PC-3 (cell line): ENCODE measurements at regions of chr1 and their contacts with region 1.

Region 1: GRCh38 chr1:150979092-150980056 is 2.7 kb upstream of the ANXA9 start:
- DNase-seq: peak; percentile 99
- ATAC-seq: peak; percentile 13
- H3K4me3 ChIP-seq: no peak overlapping the region
- H3K27ac ChIP-seq: no peak overlapping the region
- H3K4me1 ChIP-seq: peaks cover 42% of the 10 kb centered on the region
- H3K27me3 ChIP-seq: no peaks in the 10 kb centered on the region
- CTCF ChIP-seq: peak; percentile 100

Region 2: DNA sequence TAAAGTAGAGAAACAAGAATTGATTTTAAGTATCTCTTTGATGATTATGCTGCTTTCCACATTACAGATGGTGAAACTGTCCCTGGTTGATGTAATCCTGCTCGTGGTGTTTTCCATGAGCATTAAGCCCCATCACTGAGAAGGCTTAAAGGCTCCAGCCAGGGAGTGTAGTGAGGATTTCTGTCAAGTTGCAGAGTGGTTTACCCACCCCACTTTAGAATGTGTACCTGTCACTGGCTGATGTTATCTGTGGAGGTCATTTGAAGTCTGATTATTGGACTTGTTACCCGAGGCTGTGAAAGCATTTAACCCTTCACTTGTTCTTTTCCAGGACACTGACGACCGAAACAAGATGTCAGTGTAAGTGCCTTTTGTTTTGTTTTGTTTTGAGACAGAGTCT is 17.6 kb before region 1 on chr1:
- CTCF ChIA-PET with region 1: interaction called, 3 read pairs
- POLR2A ChIA-PET with region 1: no interaction called
- intact Hi-C with region 1: loop called (anchors 1 kb)
- DNase-seq: no peak
- ATAC-seq: no peak
- H3K4me3 ChIP-seq: no peak overlapping the region
- H3K27ac ChIP-seq: no peak overlapping the region
- H3K4me1 ChIP-seq: no peaks in the 10 kb centered on the region
- H3K27me3 ChIP-seq: no peaks in the 10 kb centered on the region
- CTCF ChIP-seq: no peak

Region 3: DNA sequence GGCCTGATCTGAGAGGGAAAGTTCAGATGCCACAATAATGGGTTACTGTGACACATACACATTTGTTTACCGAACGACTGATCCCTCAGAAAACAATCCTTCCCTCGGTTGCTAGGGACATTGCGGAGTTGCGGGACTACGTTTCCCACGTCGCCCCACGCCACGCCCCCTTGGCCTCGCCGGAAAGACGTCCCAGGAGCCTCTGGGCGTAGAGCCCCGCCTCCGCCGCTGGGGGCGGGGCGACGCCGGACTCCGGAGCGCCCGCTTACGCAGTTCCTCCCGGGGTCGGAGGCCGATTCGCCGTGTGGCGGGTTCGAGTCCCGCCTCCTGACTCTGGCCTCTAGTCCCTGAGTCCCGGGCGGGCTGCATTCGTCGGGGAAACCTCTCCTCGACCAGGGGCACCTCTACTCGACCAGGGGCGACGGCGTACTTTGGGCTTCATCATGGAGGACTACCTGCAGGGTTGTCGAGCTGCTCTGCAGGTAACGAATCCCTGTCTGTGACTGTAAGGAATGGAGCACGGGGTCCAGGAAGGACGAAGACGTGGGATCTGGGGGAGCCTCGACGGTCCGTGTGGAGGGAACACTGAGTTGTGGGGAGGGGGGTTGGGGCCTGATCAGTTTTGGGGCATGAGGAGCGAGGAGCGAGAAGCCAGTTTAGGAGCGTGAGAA is 29.0 kb after region 1 on chr1 and contains the start of gene PRUNE1:
- CTCF ChIA-PET with region 1: interaction called, 10 read pairs
- POLR2A ChIA-PET with region 1: interaction called, 7 read pairs
- intact Hi-C with region 1: loop called (anchors 1 kb)
- DNase-seq: peak; percentile 100
- ATAC-seq: peak; percentile 83
- H3K4me3 ChIP-seq: peak within 1 kb of the TSS; percentile 86
- H3K27ac ChIP-seq: peak within 1 kb of the TSS; percentile 82
- H3K4me1 ChIP-seq: peaks cover 37% of the 10 kb centered on the region
- H3K27me3 ChIP-seq: no peaks in the 10 kb centered on the region
- CTCF ChIP-seq: no peak
- total RNA-seq, gene PRUNE1: 19.4 and 20.3 TPM in 2 replicates

Region 4: DNA sequence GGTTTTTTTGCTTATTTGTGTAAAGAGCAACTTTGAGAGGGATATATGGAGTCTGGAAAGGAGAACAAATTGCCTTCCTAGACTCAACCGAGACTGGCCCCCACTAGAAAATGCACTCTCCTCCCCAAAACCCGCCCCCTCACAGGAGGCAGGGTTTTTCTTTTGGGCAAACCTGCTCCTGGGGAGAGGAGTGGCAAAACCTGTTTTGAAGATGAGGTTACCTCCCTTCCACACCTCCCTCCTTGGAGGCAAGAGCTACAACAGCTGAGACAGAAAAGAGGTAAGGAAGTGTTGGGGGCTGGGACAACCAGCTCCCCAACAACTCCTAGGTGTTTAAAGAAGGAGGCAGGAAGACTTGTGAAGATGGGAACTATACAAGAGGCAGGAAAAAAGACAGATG is 57.0 kb after region 1 on chr1 and contains the start of gene BNIPL:
- CTCF ChIA-PET with region 1: no interaction called
- POLR2A ChIA-PET with region 1: no interaction called
- intact Hi-C with region 1: no loop called
- DNase-seq: peak; percentile 21
- ATAC-seq: no peak
- H3K4me3 ChIP-seq: no peak within 1 kb of the TSS
- H3K27ac ChIP-seq: no peak within 1 kb of the TSS
- H3K4me1 ChIP-seq: peaks cover 5% of the 10 kb centered on the region
- H3K27me3 ChIP-seq: no peaks in the 10 kb centered on the region
- CTCF ChIP-seq: no peak
- total RNA-seq, gene BNIPL: 0.51 and 2.4 TPM in 2 replicates